B cell (primary cell): ENCODE measurements at regions of chr12 and their contacts with region 1.

Region 1: DNA sequence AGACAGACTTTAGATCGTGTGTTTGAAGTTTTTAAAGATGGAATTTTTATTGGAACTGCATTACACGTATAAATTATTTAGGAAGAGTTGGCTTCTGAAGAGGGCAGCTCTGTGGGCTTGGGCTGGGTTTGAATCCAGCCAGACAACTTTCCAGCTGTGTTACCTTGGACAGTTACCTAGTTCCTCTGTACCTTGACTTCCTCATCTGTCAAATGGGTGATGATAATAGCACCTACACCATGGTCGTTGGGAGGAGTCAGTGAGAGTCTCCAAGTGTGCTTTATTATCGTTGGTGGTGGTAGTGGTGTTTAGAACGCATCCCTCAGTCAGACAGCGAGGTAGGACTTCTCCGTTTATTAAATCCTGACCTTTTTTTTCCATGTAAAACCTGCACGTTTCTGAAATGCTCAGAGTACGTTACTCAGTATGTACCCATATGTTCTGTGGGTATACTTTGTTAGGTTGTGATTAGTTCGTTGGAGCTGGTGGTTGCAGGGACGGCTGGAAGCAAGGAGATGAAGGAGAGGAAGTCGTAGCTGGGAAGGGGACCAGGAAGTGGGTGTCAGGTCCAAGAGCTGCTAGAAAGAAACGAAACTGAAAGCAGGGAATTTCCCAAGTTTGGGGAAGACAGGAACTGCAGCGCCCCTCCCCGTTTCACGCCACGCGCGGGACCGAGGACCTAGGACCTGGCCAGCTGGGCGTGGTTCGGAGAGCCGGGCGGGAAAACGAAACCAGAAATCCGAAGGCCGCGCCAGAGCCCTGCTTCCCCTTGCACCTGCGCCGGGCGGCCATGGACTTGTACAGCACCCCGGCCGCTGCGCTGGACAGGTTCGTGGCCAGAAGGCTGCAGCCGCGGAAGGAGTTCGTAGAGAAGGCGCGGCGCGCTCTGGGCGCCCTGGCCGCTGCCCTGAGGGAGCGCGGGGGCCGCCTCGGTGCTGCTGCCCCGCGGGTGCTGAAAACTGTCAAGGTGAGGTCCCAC is at the start of gene OAS3:
- DNase-seq: peak; percentile 81
- ATAC-seq: peak; percentile 70
- H3K4me3 ChIP-seq: peak within 1 kb of the TSS; percentile 63 to 81 (median 76)
- H3K4me3 Mint-ChIP-seq: peak within 1 kb of the TSS; percentile 89
- H3K27ac ChIP-seq: peak within 1 kb of the TSS; percentile 45 to 59
- H3K27ac Mint-ChIP-seq: peak within 1 kb of the TSS; percentile 83
- H3K4me1 ChIP-seq: peaks cover 25 to 26% of the 10 kb centered on the region in 2 donors
- H3K4me1 Mint-ChIP-seq: peaks cover 28% of the 10 kb centered on the region
- H3K27me3 ChIP-seq: no peaks in the 10 kb centered on the region
- H3K27me3 Mint-ChIP-seq: no peaks in the 10 kb centered on the region
- CTCF ChIP-seq: no peak
- total RNA-seq, gene OAS3: 24.9 and 25.5 TPM in 2 replicates

Region 2: DNA sequence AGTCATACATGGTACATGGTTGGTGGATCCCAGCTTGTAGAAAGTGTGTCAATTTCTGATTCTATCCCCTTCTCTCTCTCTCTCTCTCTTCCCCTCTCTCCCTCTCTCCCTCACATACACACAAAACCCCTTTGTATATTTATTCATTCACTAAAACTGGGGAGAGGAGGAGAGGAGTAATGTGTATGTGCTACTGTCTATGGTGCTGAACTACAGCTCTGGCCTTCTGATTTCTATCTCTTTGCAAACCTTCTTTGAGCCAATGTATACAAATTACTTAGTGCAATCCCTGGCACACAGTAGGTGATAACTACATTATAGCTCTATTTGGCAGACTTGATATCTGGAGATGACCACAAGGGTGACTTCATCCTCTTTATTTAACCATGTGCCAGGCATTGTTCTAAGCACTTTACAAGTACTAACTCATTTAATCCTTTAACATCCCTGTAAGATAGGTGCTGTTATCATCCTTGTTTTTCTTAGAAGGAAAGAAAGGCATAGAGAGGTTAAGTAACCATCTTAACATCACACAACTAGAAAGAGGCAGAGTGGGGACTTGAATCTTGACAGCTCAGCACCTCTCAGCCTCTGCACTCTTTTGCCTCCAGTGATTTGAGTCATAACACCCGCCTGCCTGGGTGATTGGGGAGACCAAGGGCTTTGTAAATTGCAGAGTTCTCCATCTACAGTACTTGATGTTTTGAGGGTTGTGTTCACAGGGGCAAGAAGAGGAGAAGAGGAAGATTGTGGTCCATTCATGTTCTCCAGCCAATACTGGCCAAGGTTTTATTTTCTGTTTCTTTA is 125.2 kb before region 1 on chr12:
- CTCF ChIA-PET with region 1: no interaction called
- POLR2A ChIA-PET with region 1: no interaction called
- intact Hi-C with region 1: no loop called
- DNase-seq: no peak
- ATAC-seq: no peak
- H3K4me3 ChIP-seq: no peak overlapping the region
- H3K4me3 Mint-ChIP-seq: no peak overlapping the region
- H3K27ac ChIP-seq: no peak overlapping the region
- H3K27ac Mint-ChIP-seq: no peak overlapping the region
- H3K4me1 ChIP-seq: no peaks in the 10 kb centered on the region
- H3K4me1 Mint-ChIP-seq: no peaks in the 10 kb centered on the region
- H3K27me3 ChIP-seq: peaks cover 0 to 7% (median 0%) of the 10 kb centered on the region in 4 experiments
- H3K27me3 Mint-ChIP-seq: peaks cover 43% of the 10 kb centered on the region
- CTCF ChIP-seq: no peak

Region 3: GRCh38 chr12:112924986-112925385 is 13.0 kb before region 1 on chr12:
- CTCF ChIA-PET with region 1: interaction called, 4 read pairs
- POLR2A ChIA-PET with region 1: no interaction called
- intact Hi-C with region 1: loop called (anchors 2 kb)
- DNase-seq: peak; percentile 48
- ATAC-seq: no peak
- H3K4me3 ChIP-seq: no peak overlapping the region
- H3K4me3 Mint-ChIP-seq: peak overlapping the region; percentile 61
- H3K27ac ChIP-seq: peak overlapping the region in 1 of 2 donors; percentile 52
- H3K27ac Mint-ChIP-seq: peak overlapping the region; percentile 83
- H3K4me1 ChIP-seq: peaks cover 20 to 36% of the 10 kb centered on the region in 2 donors
- H3K4me1 Mint-ChIP-seq: peaks cover 42% of the 10 kb centered on the region
- H3K27me3 ChIP-seq: no peaks in the 10 kb centered on the region
- H3K27me3 Mint-ChIP-seq: no peaks in the 10 kb centered on the region
- CTCF ChIP-seq: no peak

Region 4: GRCh38 chr12:112978163-112979040 is 40.4 kb after region 1 on chr12 and contains the start of gene OAS2:
- CTCF ChIA-PET with region 1: interaction called, 9 read pairs
- POLR2A ChIA-PET with region 1: interaction called, 3 read pairs
- intact Hi-C with region 1: loop called (anchors 1 kb)
- DNase-seq: peak; percentile 92
- ATAC-seq: peak; percentile 94
- H3K4me3 ChIP-seq: peak within 1 kb of the TSS; percentile 70 to 94 (median 78)
- H3K4me3 Mint-ChIP-seq: peak within 1 kb of the TSS; percentile 98
- H3K27ac ChIP-seq: peak within 1 kb of the TSS; percentile 90 to 94
- H3K27ac Mint-ChIP-seq: peak within 1 kb of the TSS; percentile 98
- H3K4me1 ChIP-seq: peaks cover 39 to 40% of the 10 kb centered on the region in 2 donors
- H3K4me1 Mint-ChIP-seq: peaks cover 59% of the 10 kb centered on the region
- H3K27me3 ChIP-seq: no peaks in the 10 kb centered on the region
- H3K27me3 Mint-ChIP-seq: no peaks in the 10 kb centered on the region
- CTCF ChIP-seq: no peak
- total RNA-seq, gene OAS2: 57.4 and 59.3 TPM in 2 replicates